ENCODE measurements at regions of chr3 and their contacts with region 1.

Region 1: DNA sequence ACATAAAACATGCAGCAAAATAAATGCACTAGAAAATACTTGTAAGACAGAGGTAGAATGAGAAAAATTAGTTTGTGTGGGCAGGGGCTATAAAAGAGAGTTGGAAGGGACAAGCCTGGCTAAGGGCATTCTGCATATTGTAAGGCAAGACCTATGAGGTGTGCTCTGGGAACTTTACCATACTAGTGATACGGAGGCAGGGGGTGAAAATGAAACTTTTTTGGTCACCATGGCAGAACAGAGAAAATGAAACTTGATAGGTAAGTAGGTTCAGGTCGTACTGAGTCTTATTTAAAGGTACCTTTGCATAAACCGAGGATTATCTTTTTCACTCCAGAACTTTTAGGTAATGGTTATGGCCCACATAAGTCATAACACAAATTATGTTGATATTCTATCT is 74.7 kb upstream of the ACKR4 start:
- DNase-seq: no peak
- H3K4me3 Mint-ChIP-seq: no peak overlapping the region
- H3K27ac Mint-ChIP-seq: no peak overlapping the region
- H3K4me1 Mint-ChIP-seq: peaks cover 25% of the 10 kb centered on the region
- H3K27me3 Mint-ChIP-seq: no peaks in the 10 kb centered on the region

Region 2: DNA sequence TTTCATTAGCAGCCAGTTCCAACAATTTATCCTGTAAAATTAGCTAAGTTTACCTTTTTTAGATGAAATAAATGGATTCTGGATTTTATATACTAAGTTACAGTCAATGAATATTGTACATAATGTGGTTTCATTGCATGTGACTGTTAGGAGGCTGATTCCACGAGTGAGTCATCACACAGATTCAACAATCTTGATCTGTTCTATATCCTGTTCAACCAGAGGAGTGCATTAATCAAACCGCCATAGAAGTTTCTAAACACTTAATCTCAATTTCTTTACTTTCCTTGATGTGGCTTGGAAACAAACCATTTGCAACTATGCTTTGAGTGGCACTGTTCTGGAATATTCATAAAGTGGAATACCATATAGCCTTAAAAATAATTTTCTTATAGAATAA is 89.7 kb before region 1 on chr3:
- intact Hi-C with region 1: loop called (anchors 5 kb)
- DNase-seq: no peak
- H3K4me3 Mint-ChIP-seq: no peak overlapping the region
- H3K27ac Mint-ChIP-seq: no peak overlapping the region
- H3K4me1 Mint-ChIP-seq: peaks cover 38% of the 10 kb centered on the region
- H3K27me3 Mint-ChIP-seq: no peaks in the 10 kb centered on the region

Measured in activated T-helper 2 cell treated with anti-CD3 and anti-CD28 coated beads, Interferon-gamma antibody, Interleukin-2, Interleukin-4, amounts not matched to agents 10 μg/mL and 5 μg/mL and 100 μg/mL, durations not matched to agents 14 hours and 24 hours and 36 hours (primary cell).